ENCODE measurements at regions of chr7 and their contacts with region 1.

Region 1: DNA sequence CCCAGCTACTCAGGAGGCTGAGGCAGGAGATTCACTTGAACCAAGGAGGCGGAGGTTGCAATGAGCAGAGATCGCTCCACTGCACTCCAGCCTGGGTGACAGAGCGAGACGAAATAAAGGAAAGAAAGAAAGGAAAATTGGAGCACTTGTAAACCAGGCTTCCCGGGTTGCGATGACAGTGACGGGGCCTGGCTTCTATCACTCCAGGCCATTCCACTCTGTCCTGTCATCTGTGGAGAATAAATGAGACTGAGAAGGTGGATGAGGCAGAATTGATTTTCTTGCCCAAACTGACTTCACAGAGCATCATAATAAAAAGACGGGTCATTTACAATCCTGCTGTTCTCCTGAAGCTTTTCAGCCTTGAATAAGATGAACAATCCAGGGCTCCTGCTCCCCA is 12.1 kb upstream of the KPNA7 start:
- DNase-seq: no peak
- H3K4me3 ChIP-seq: no peak overlapping the region
- H3K27ac ChIP-seq: peak overlapping the region; percentile 45 to 55
- H3K4me1 ChIP-seq: peaks cover 0 to 1% of the 10 kb centered on the region in 2 donors
- H3K27me3 ChIP-seq: no peaks in the 10 kb centered on the region
- CTCF ChIP-seq: no peak

Region 2: GRCh38 chr7:98669329-98670000 is 550.5 kb before region 1 on chr7:
- intact Hi-C with region 1: no loop called
- DNase-seq: no peak
- H3K4me3 ChIP-seq: no peak overlapping the region
- H3K27ac ChIP-seq: no peak overlapping the region
- H3K4me1 ChIP-seq: no peaks in the 10 kb centered on the region
- H3K27me3 ChIP-seq: no peaks in the 10 kb centered on the region
- CTCF ChIP-seq: no peak

Region 3: DNA sequence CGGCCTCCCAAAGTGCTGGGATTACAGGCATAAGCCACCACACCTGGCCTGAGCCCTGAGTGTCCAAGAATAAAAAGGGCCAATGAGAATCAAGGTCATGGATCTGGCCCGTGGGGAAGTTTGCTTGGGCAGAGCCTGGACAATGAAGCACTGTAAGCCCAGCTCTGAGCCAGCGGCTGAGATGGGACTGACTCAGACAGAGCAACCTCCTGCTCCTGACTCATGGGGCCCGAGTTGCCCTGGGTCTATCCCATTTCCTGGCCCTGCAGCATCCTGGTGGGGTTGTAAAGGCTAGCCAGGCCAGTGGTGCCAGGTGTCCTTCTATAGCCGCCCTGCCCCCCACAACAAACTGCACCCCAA is 47.5 kb after region 1 on chr7:
- intact Hi-C with region 1: loop called (anchors 5 kb)
- DNase-seq: peak; percentile 32 to 78
- H3K4me3 ChIP-seq: no peak overlapping the region
- H3K27ac ChIP-seq: peak overlapping the region; percentile 63 to 68
- H3K4me1 ChIP-seq: peaks cover 0 to 13% of the 10 kb centered on the region in 2 donors
- H3K27me3 ChIP-seq: no peaks in the 10 kb centered on the region
- CTCF ChIP-seq: no peak

Measured in ascending aorta (tissue), 2 donors.